ENCODE measurements at regions of chr10 and their contacts with region 1.

Region 1: DNA sequence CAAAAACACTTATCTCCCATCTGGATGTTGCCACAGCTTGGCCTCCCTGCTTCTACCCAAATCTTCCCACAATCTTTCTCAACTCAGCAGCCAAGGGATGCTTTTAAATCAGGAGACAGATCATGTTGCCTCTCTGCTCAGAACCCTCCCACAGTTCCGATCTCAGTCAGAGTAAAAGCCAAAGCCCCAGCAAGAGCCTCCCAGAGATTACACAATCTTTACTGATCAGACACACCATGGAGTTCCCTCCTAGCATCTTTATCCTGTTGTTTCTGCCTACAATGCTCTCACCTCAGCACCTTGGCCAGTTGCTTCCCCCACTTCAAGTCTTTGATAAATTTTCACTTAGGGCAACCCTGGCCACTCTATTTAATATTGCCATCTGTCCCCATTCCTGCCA is 41.9 kb upstream of the ZNF33B start:
- DNase-seq: no peak
- H3K4me3 ChIP-seq: no peak overlapping the region
- H3K27ac ChIP-seq: no peak overlapping the region
- H3K4me1 ChIP-seq: no peaks in the 10 kb centered on the region
- H3K27me3 ChIP-seq: no peaks in the 10 kb centered on the region
- CTCF ChIP-seq: no peak

Region 2: GRCh38 chr10:42367532-42368230 is 312.6 kb before region 1 on chr10:
- CTCF ChIA-PET with region 1: interaction called, 10 read pairs
- POLR2A ChIA-PET with region 1: no interaction called
- intact Hi-C with region 1: no loop called
- DNase-seq: peak; percentile 88 to 91
- H3K4me3 ChIP-seq: peak overlapping the region; percentile 89
- H3K27ac ChIP-seq: no peak overlapping the region
- H3K4me1 ChIP-seq: no peaks in the 10 kb centered on the region; the same call in 1 of the 2 replicates
- H3K27me3 ChIP-seq: no peaks in the 10 kb centered on the region
- CTCF ChIP-seq: no peak

Region 3: DNA sequence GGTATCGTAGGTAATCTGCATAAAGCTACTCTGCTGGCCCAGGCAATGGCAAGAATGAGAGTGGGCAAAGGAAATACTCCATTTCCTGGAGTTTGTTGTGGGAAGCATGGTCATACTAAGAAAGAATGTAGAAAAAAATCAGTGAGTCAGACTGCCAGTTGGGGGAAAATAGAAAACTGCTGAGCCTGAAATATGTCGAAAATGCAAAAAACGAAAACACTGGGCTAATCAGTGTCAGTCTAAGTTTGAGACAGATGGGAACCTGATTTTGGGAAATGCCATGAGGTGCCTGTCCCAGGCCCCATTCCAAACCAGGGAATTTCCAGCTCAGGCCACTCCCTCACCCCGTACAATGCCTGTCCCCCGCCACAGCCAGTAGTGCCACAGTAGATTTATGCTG is 191.9 kb before region 1 on chr10:
- CTCF ChIA-PET with region 1: no interaction called
- POLR2A ChIA-PET with region 1: interaction called, 25 read pairs
- intact Hi-C with region 1: no loop called
- DNase-seq: peak in 1 of 2 experiments; percentile 34
- H3K4me3 ChIP-seq: no peak overlapping the region
- H3K27ac ChIP-seq: no peak overlapping the region
- H3K4me1 ChIP-seq: no peaks in the 10 kb centered on the region
- H3K27me3 ChIP-seq: 0 out of 2 replicates have a peak, but pooled peaks cover under 1% of the 10 kb centered on the region
- CTCF ChIP-seq: no peak